Activated B cell treated with CpG ODN at 0.5 μM for 24 hours (primary cell): ENCODE measurements at regions of chr1 and their contacts with region 1.

Region 1: GRCh38 chr1:181088079-181089016 is at the start of gene IER5:
- DNase-seq: peak; percentile 91
- ATAC-seq: peak; percentile 66
- H3K4me3 Mint-ChIP-seq: peak within 1 kb of the TSS; percentile 99
- H3K27ac Mint-ChIP-seq: peak within 1 kb of the TSS; percentile 98
- H3K4me1 Mint-ChIP-seq: peaks cover 58% of the 10 kb centered on the region
- H3K27me3 Mint-ChIP-seq: no peaks in the 10 kb centered on the region
- CTCF ChIP-seq: no peak
- total RNA-seq, gene IER5: 155 and 156 TPM in 2 replicates

Region 2: GRCh38 chr1:179882243-179883039 is 1205.9 kb before region 1 on chr1 and contains the start of gene TOR1AIP1:
- CTCF ChIA-PET with region 1: no interaction called
- POLR2A ChIA-PET with region 1: no interaction called
- intact Hi-C with region 1: loop called (anchors 5 kb)
- DNase-seq: peak; percentile 96
- ATAC-seq: peak; percentile 76
- H3K4me3 Mint-ChIP-seq: peak within 1 kb of the TSS; percentile 100
- H3K27ac Mint-ChIP-seq: peak within 1 kb of the TSS; percentile 100
- H3K4me1 Mint-ChIP-seq: peaks cover 64% of the 10 kb centered on the region
- H3K27me3 Mint-ChIP-seq: no peaks in the 10 kb centered on the region
- CTCF ChIP-seq: no peak
- total RNA-seq, gene TOR1AIP1: 42.3 and 46.6 TPM in 2 replicates

Region 3: DNA sequence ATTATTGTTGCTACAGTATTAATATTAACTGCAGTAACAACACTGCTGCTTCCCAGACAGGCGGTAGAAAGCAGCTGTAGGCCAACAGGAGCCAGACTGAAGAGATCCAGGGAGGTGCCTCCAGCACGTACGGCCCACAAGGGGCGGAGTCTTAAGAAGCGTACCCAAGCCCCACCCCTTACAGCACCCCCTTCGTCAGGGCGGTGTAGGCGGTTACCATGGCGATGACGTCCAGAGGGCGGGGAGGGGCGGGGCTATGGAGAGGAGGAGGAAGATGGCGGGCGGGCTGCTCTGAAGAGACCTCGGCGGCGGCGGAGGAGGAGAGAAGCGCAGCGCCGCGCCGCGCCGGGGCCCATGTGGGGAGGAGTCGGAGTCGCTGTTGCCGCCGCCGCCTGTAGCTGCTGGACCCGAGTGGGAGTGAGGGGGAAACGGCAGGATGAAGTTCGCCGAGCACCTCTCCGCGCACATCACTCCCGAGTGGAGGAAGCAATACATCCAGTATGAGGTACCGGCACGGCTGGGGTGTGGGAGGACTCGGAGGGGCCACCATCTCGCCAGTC is 456.5 kb before region 1 on chr1 and contains the start of gene XPR1:
- CTCF ChIA-PET with region 1: no interaction called
- POLR2A ChIA-PET with region 1: interaction called, 6 read pairs
- intact Hi-C with region 1: loop called (anchors 10 kb)
- DNase-seq: peak; percentile 84
- ATAC-seq: peak; percentile 95
- H3K4me3 Mint-ChIP-seq: peak within 1 kb of the TSS; percentile 35
- H3K27ac Mint-ChIP-seq: peak within 1 kb of the TSS; percentile 88
- H3K4me1 Mint-ChIP-seq: peaks cover 17% of the 10 kb centered on the region
- H3K27me3 Mint-ChIP-seq: peaks cover 5% of the 10 kb centered on the region
- CTCF ChIP-seq: no peak
- total RNA-seq, gene XPR1: 17.1 and 20.4 TPM in 2 replicates

Region 4: DNA sequence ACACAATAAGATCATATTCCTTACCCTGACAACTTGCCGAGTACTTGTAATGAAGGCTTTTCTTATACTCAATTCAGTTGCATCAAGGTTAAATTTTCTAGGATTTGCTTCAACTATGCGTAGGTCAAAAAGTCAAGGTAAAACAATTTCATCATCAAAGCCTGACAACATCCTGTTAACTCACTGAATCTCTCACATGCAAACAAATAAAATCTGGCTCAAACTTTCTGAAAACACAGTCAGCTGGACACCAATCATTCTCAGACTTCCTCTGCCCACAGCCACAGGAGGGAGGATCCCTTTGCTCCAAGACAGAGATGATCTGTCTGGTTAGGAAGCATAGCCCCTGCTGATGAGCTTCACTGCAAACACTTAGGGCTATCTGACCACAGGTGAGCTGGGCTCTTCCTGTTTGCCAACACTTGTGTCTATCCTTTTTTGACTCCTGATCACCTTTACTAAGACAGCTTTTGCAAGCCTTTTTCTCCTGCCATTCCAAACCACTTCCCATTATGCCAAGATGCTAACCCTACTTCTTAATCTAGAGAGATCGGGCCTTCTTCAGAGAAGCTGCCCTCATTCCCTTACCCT is 85.7 kb before region 1 on chr1:
- CTCF ChIA-PET with region 1: no interaction called
- POLR2A ChIA-PET with region 1: no interaction called
- intact Hi-C with region 1: no loop called
- DNase-seq: no peak
- ATAC-seq: no peak
- H3K4me3 Mint-ChIP-seq: no peak overlapping the region
- H3K27ac Mint-ChIP-seq: no peak overlapping the region
- H3K4me1 Mint-ChIP-seq: no peaks in the 10 kb centered on the region
- H3K27me3 Mint-ChIP-seq: no peaks in the 10 kb centered on the region
- CTCF ChIP-seq: no peak

Region 5: GRCh38 chr1:181033799-181034451 is 54.4 kb before region 1 on chr1 and contains the start of gene MR1:
- CTCF ChIA-PET with region 1: interaction called, 20 read pairs
- POLR2A ChIA-PET with region 1: interaction called, 30 read pairs
- intact Hi-C with region 1: loop called (anchors 1 kb)
- DNase-seq: no peak
- ATAC-seq: peak; percentile 96
- H3K4me3 Mint-ChIP-seq: peak within 1 kb of the TSS; percentile 98
- H3K27ac Mint-ChIP-seq: peak within 1 kb of the TSS; percentile 99
- H3K4me1 Mint-ChIP-seq: peaks cover 60% of the 10 kb centered on the region
- H3K27me3 Mint-ChIP-seq: no peaks in the 10 kb centered on the region
- CTCF ChIP-seq: no peak
- total RNA-seq, gene MR1: 24.3 and 24.8 TPM in 2 replicates

Region 6: DNA sequence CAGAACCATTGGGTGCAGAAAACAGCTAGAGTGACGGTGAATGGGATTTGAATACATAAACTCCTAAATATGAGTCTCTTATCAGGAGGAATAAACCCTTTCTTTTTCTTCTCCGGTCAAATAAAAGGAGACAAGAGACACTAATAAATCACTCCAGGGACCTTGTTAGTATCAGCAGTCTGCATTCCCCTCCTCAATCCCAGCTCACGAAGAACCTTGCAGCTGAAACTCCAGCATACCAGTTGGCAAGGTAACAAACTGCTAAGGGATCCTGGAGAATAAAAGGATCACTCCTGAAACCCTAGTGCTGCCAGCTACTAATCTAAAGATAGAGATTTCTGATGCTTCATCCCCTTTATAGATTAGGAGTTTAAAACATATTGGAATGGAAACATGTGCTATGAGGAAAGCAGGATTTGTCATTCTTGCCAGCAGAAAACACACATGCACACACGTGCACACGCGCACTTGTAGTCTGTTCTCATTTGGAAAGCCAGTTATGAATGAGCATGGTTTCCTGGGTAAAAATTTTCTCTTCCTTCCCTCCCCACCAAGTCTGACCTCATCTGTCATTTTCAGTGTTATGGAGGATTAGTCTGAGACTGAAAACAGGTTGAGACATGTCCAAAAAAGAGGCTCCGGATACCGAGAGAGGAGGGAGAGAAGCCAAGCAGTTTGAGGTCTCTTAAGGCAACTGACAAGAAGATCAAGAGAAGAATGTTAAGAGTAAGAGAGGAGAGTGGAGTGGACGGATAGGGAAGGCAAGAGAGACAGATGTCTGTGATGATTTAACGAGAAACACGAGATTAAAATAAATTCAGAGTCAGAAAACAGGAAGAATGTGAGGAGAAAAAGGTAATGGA is 11.0 kb after region 1 on chr1:
- CTCF ChIA-PET with region 1: interaction called, 31 read pairs
- POLR2A ChIA-PET with region 1: interaction called, 428 read pairs
- intact Hi-C with region 1: loop called (anchors 1 kb)
- DNase-seq: no peak
- ATAC-seq: peak; percentile 30
- H3K4me3 Mint-ChIP-seq: peak overlapping the region; percentile 47
- H3K27ac Mint-ChIP-seq: peak overlapping the region; percentile 74
- H3K4me1 Mint-ChIP-seq: peaks cover 69% of the 10 kb centered on the region
- H3K27me3 Mint-ChIP-seq: no peaks in the 10 kb centered on the region
- CTCF ChIP-seq: no peak

Region 7: DNA sequence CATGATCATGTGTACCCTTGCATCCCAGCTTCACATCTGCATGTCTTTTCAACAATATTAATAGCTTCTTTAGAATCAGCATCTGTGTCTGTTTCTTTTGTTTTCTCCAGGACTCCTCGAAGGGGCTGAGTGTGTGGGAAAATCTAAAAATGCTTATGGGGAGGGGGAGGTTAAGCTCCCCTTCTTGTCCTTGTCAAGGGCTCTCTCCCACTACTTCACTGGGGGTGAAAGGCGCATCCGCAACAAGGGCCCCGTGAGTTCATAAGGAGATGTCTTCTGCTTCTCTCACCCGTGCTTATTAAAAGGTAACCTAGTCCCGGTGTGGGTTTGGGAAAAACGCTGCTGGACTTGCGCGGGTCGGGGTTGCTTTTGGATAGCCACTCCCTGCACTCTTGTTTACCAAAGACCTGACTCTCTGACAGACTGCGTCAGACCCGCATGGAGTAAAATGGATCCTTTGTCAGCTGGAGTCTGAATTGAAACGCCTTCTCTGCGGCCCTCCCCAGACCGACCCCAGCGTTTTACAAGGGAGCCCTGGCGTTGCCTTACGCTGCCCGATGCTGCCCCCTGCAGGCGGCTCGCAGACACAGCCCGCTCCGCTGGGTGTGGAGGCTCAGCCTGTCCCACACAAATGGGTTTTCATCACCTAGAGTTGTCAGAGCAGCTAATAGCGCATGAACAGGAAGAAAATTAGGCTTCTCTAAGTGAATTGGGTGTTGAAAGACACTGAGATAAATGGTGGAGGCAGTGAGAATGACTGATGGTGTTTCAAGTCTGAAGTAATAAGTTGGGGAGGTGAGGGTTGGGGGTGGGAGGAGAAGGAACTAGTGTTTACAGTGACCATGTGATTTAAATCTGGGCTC is 54.0 kb after region 1 on chr1:
- CTCF ChIA-PET with region 1: interaction called, 194 read pairs
- POLR2A ChIA-PET with region 1: interaction called, 1,783 read pairs
- intact Hi-C with region 1: loop called (anchors 1 kb)
- DNase-seq: peak; percentile 86
- ATAC-seq: peak; percentile 95
- H3K4me3 Mint-ChIP-seq: peak overlapping the region; percentile 72
- H3K27ac Mint-ChIP-seq: peak overlapping the region; percentile 76
- H3K4me1 Mint-ChIP-seq: peaks cover 48% of the 10 kb centered on the region
- H3K27me3 Mint-ChIP-seq: no peaks in the 10 kb centered on the region
- CTCF ChIP-seq: peak; percentile 79

Region 8: DNA sequence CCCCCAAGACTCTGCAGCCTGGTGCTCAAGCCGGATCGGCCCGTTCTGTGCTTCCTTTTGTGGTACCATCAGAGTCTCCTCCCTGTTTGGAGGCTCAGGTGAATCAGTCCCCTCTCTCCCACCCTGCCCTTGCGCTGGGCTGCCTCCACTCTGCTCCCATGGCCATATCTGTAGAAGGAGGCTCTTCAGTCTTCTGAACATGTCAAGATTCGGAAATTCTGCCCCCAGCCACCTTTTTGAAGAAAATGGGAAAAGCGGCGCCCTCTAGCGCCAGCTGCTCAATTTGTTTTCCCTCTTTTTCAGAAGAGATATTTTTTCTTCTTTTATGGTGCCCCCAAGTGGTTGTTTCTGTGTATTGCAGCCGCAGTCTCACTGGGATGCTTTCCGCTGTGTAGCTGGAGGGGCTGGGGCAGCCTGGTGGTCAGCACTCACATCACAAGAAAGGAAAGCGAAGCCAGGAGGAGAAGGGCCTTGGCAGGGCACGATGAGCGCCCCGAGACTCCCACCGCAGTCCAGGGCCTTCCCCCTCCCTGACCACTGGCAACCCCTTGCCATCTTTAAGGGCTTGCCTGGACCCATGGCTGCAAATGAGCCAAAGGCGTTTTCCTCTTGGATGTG is 336.5 kb after region 1 on chr1:
- CTCF ChIA-PET with region 1: no interaction called
- POLR2A ChIA-PET with region 1: no interaction called
- intact Hi-C with region 1: loop called (anchors 10 kb)
- DNase-seq: peak; percentile 18
- ATAC-seq: peak; percentile 28
- H3K4me3 Mint-ChIP-seq: no peak overlapping the region
- H3K27ac Mint-ChIP-seq: no peak overlapping the region
- H3K4me1 Mint-ChIP-seq: no peaks in the 10 kb centered on the region
- H3K27me3 Mint-ChIP-seq: peaks cover 37% of the 10 kb centered on the region
- CTCF ChIP-seq: peak; percentile 42